Activated B cell treated with CpG ODN at 0.5 μM for 24 hours (primary cell): ENCODE measurements at regions of chr2 and their contacts with region 1.

Region 1: DNA sequence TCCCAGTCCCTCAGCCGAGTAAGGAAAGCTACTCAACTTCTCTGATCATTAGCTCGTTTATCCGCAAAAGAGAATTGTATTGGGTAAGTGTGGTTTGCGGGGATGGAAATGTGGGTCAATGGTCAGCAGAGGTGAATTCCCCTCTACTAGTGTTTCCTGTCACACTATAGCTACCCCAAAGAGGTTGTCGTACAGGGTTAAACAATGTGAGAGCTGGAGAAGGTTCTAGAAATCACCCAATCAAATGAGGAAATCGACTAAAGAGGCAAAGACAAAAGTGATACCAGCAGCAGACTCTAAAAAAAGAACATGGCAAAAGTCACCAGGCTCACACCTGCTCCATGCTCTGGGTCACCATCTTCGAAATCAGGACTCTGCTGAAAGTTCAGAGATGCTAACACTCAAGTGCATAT is 144.7 kb upstream of the ITGA4 start:
- DNase-seq: no peak
- ATAC-seq: peak; percentile 64
- H3K4me3 Mint-ChIP-seq: peak overlapping the region; percentile 53
- H3K27ac Mint-ChIP-seq: peak overlapping the region; percentile 90
- H3K4me1 Mint-ChIP-seq: peaks cover 60% of the 10 kb centered on the region
- H3K27me3 Mint-ChIP-seq: no peaks in the 10 kb centered on the region
- CTCF ChIP-seq: no peak

Region 2: DNA sequence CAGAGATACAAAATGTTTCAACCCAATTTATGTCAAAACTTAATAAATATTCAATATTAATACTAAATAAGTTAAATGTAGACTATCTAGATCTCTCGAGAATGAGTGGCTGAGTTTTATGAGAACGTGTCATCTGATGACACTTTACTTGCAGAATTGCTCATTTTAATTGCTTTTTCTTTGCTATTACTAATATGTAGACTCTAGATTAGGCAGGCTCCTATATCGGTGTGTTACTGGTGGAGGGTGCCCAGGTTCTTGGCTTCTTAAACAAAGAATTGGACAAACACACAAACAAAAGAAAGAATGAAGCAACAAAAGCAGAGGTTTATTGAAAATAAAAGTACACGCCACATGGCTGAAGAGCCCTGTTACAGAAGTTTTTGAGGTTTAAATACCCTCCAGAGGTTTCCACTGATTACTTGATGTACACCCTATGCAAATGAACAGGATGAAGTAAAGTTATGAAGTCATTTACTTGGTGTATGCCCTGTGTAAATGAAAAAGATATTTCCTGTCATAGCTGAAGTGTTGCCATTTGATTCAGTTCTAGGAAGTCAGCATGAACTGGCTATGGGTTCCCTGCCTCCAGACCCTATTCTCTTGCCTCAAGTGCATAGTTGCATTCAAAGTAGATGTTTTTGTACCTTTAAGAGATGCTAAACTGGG is 21.8 kb after region 1 on chr2:
- CTCF ChIA-PET with region 1: no interaction called
- POLR2A ChIA-PET with region 1: interaction called, 4 read pairs
- intact Hi-C with region 1: loop called (anchors 1 kb)
- DNase-seq: no peak
- ATAC-seq: peak; percentile 61
- H3K4me3 Mint-ChIP-seq: no peak overlapping the region
- H3K27ac Mint-ChIP-seq: peak overlapping the region; percentile 25
- H3K4me1 Mint-ChIP-seq: peaks cover 10% of the 10 kb centered on the region
- H3K27me3 Mint-ChIP-seq: no peaks in the 10 kb centered on the region
- CTCF ChIP-seq: no peak

Region 3: DNA sequence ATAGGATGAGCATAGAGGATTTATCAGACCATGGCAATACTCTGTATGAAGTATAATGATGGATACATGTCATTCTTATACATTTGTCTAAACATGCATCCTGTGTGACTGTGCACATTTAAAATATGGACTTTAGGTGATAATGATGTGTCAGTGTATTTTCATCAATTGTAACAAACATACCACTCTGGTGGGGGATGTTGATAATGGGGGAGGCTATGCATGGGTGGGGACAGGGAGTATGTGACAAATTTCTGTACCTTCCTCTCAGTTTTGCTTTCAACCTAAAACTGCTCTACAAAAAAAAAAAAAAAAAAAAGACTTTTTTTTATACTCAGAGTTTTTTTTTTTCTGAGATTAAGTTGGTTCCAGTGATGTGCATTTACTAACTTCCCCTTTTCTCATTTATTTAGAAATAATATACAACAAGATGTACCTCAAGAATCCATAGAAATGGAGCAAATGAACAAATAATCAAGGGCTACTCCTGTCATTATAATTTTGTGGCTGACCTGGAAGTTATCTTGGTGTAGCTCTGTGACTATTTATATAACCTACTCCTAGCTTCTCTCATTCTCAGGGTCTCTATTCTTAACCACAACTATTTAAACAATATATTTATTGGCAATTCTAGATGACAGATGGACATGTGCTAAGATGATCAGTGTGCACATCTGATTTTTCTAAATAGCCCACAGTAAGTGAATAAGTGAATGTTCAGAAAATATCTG is 35.8 kb after region 1 on chr2:
- CTCF ChIA-PET with region 1: interaction called, 6 read pairs
- POLR2A ChIA-PET with region 1: interaction called, 3 read pairs
- intact Hi-C with region 1: loop called (anchors 2 kb)
- DNase-seq: no peak
- ATAC-seq: peak; percentile 75
- H3K4me3 Mint-ChIP-seq: no peak overlapping the region
- H3K27ac Mint-ChIP-seq: peak overlapping the region; percentile 67
- H3K4me1 Mint-ChIP-seq: peaks cover 38% of the 10 kb centered on the region
- H3K27me3 Mint-ChIP-seq: no peaks in the 10 kb centered on the region
- CTCF ChIP-seq: no peak

Region 4: GRCh38 chr2:181411105-181411849 is 98.8 kb after region 1 on chr2:
- CTCF ChIA-PET with region 1: interaction called, 6 read pairs
- POLR2A ChIA-PET with region 1: interaction called, 15 read pairs
- intact Hi-C with region 1: loop called (anchors 2 kb)
- DNase-seq: peak; percentile 54
- ATAC-seq: peak; percentile 98
- H3K4me3 Mint-ChIP-seq: peak overlapping the region; percentile 52
- H3K27ac Mint-ChIP-seq: peak overlapping the region; percentile 86
- H3K4me1 Mint-ChIP-seq: peaks cover 88% of the 10 kb centered on the region
- H3K27me3 Mint-ChIP-seq: no peaks in the 10 kb centered on the region
- CTCF ChIP-seq: no peak

Region 5: DNA sequence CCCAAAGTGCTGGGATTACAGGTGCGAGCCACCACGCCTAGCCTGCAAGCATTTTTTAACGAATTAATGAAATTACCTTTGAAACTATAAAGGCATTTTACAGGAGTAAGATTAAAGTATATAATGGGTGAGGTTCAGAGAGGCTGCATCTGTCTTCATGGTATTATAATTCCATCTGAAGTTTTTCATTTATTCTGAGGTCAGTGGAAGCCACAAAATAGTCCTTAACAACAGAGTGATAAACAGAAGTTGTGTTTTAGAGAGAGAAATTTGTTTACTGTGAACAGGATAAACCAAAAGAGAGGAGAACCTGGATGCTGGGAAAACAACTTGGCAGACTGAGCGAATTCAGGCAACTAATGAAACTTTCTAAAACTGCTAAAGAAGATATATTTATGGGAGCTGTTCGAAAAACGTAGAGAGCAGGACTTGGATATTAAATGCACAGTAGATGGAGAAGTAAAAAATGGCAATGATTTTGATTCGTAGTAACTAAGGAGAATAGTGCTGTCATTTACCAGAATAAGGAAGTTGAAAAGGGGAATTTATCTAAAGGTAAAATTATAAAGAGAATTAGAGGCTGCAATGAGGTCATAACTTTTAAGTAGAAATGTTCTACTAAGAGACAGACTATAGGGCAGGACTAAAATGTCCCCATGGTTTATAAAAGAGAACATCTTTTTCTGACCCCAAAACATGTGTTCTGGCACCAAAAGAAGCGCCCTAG is 106.8 kb after region 1 on chr2:
- CTCF ChIA-PET with region 1: no interaction called
- POLR2A ChIA-PET with region 1: interaction called, 3 read pairs
- intact Hi-C with region 1: loop called (anchors 1 kb)
- DNase-seq: no peak
- ATAC-seq: peak; percentile 82
- H3K4me3 Mint-ChIP-seq: peak overlapping the region; percentile 20
- H3K27ac Mint-ChIP-seq: peak overlapping the region; percentile 87
- H3K4me1 Mint-ChIP-seq: peaks cover 75% of the 10 kb centered on the region
- H3K27me3 Mint-ChIP-seq: no peaks in the 10 kb centered on the region
- CTCF ChIP-seq: no peak